ENCODE measurements at regions of chr19 and their contacts with region 1.

Region 1: GRCh38 chr19:16259385-16260159 is 61.9 kb downstream of the AP1M1 start:
- DNase-seq: no peak
- H3K4me3 ChIP-seq: no peak overlapping the region
- H3K4me3 Mint-ChIP-seq: no peak overlapping the region
- H3K27ac Mint-ChIP-seq: no peak overlapping the region
- H3K4me1 ChIP-seq: peaks cover 24% of the 10 kb centered on the region
- H3K4me1 Mint-ChIP-seq: peaks cover 19% of the 10 kb centered on the region
- H3K27me3 ChIP-seq: no peaks in the 10 kb centered on the region
- H3K27me3 Mint-ChIP-seq: no peaks in the 10 kb centered on the region
- CTCF ChIP-seq: no peak

Region 2: DNA sequence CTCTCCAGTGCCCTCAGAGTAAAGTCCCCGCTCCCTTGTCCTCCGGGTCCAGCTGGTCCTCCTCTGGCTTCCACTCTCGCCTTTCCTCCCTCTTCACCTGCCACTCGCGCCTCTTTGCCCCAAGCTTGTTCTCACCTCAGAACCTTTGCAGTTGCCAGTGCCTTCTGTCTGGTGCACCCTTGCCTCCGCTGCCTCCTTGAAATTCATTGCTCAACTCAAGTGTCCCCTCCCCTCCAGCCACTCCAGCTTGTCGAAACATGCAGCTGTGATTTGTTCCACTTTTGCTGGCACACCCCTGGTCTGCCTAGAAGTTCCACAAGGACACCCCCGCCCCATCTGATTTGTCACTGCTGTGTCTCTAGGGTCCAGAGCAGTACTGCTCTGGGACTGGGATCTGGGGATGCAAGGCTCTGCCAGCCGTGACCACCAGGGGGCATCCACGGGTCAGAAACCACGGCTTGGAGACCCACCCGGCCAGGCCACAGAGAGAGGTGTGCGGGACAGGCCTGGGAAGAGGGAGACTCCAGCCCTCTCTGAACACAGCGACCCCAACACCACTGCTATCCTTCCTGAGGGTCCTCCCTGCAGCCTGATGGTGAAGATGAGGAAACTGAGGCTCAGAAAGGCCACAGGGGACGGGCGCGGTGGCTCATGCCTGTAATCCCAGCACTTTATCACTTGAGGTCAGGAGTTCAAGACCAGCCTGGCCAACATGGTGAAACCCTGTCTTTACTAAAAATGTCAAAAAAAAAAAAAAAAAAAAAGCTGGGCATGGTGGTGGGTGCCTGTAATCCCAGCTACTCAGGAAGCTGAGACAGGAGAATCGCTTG is 12.0 kb before region 1 on chr19:
- CTCF ChIA-PET with region 1: interaction called, 13 read pairs
- POLR2A ChIA-PET with region 1: no interaction called
- intact Hi-C with region 1: no loop called
- DNase-seq: peak; percentile 82 to 90
- H3K4me3 ChIP-seq: no peak overlapping the region
- H3K4me3 Mint-ChIP-seq: no peak overlapping the region
- H3K27ac Mint-ChIP-seq: no peak overlapping the region
- H3K4me1 ChIP-seq: no peaks in the 10 kb centered on the region
- H3K4me1 Mint-ChIP-seq: peaks cover 13% of the 10 kb centered on the region
- H3K27me3 ChIP-seq: no peaks in the 10 kb centered on the region
- H3K27me3 Mint-ChIP-seq: no peaks in the 10 kb centered on the region
- CTCF ChIP-seq: peak; percentile 88 to 94

Region 3: GRCh38 chr19:16280306-16280705 is 20.7 kb after region 1 on chr19:
- CTCF ChIA-PET with region 1: interaction called, 12 read pairs
- POLR2A ChIA-PET with region 1: no interaction called
- intact Hi-C with region 1: no loop called
- DNase-seq: no peak
- H3K4me3 ChIP-seq: no peak overlapping the region
- H3K4me3 Mint-ChIP-seq: no peak overlapping the region
- H3K27ac Mint-ChIP-seq: no peak overlapping the region
- H3K4me1 ChIP-seq: no peaks in the 10 kb centered on the region
- H3K4me1 Mint-ChIP-seq: no peaks in the 10 kb centered on the region
- H3K27me3 ChIP-seq: no peaks in the 10 kb centered on the region
- H3K27me3 Mint-ChIP-seq: no peaks in the 10 kb centered on the region
- CTCF ChIP-seq: no peak

Region 4: GRCh38 chr19:16324384-16325160 is 65.0 kb after region 1 on chr19 and contains the start of gene KLF2:
- CTCF ChIA-PET with region 1: interaction called, 4 read pairs
- POLR2A ChIA-PET with region 1: no interaction called
- intact Hi-C with region 1: loop called (anchors 5 kb)
- DNase-seq: peak; percentile 71 to 84
- H3K4me3 ChIP-seq: peak within 1 kb of the TSS; percentile 61
- H3K4me3 Mint-ChIP-seq: peak within 1 kb of the TSS; percentile 66
- H3K27ac Mint-ChIP-seq: peak within 1 kb of the TSS; percentile 70
- H3K4me1 ChIP-seq: no peaks in the 10 kb centered on the region
- H3K4me1 Mint-ChIP-seq: no peaks in the 10 kb centered on the region
- H3K27me3 ChIP-seq: no peaks in the 10 kb centered on the region
- H3K27me3 Mint-ChIP-seq: no peaks in the 10 kb centered on the region
- CTCF ChIP-seq: no peak
- total RNA-seq, gene KLF2: 0.77 and 1.2 TPM in 2 replicates

Measured in Caco-2 (cell line).